B cell (primary cell): ENCODE measurements at regions of chr6 and their contacts with region 1.

Region 1: GRCh38 chr6:149316798-149317655 is 485 bp upstream of the TAB2 start:
- DNase-seq: peak; percentile 96
- ATAC-seq: peak; percentile 74
- H3K4me3 ChIP-seq: peak overlapping the region; percentile 77 to 91 (median 85)
- H3K4me3 Mint-ChIP-seq: peak overlapping the region; percentile 88
- H3K27ac ChIP-seq: peak overlapping the region; percentile 86 to 91
- H3K27ac Mint-ChIP-seq: peak overlapping the region; percentile 88
- H3K4me1 ChIP-seq: peaks cover 14 to 30% of the 10 kb centered on the region in 2 donors
- H3K4me1 Mint-ChIP-seq: peaks cover 27% of the 10 kb centered on the region
- H3K27me3 ChIP-seq: no peaks in the 10 kb centered on the region
- H3K27me3 Mint-ChIP-seq: no peaks in the 10 kb centered on the region
- CTCF ChIP-seq: no peak

Region 2: GRCh38 chr6:149190224-149190831 is 126.7 kb before region 1 on chr6:
- CTCF ChIA-PET with region 1: interaction called, 8 read pairs
- POLR2A ChIA-PET with region 1: interaction called, 4 read pairs
- intact Hi-C with region 1: loop called (anchors 1 kb)
- DNase-seq: peak; percentile 77
- ATAC-seq: peak; percentile 75
- H3K4me3 ChIP-seq: no peak overlapping the region
- H3K4me3 Mint-ChIP-seq: no peak overlapping the region
- H3K27ac ChIP-seq: no peak overlapping the region
- H3K27ac Mint-ChIP-seq: no peak overlapping the region
- H3K4me1 ChIP-seq: peaks cover 0 to 8% of the 10 kb centered on the region in 2 donors
- H3K4me1 Mint-ChIP-seq: peaks cover 10% of the 10 kb centered on the region
- H3K27me3 ChIP-seq: peaks cover 0 to 3% (median 0%) of the 10 kb centered on the region in 4 experiments
- H3K27me3 Mint-ChIP-seq: no peaks in the 10 kb centered on the region
- CTCF ChIP-seq: peak; percentile 77

Region 3: DNA sequence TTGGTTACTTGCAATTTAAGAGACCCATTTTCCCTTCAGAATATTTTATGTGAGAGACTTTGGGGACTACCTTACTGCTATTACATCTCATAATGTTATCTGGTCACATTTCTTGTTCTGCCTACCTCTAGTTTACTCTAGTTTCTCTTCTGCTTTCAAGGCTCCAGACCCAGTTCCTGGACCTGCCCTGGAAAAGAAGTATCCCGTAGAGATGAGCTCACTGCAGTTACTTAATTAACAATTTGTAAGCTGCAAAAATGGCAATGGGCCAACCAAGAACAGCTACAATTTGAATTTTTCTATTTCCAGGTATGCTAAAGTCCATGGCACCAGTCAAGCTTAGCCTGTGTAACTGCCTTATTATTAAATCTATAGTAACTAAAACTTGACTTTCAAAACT is 25.5 kb after region 1 on chr6:
- CTCF ChIA-PET with region 1: no interaction called
- POLR2A ChIA-PET with region 1: no interaction called
- intact Hi-C with region 1: loop called (anchors 2 kb)
- DNase-seq: peak; percentile 35
- ATAC-seq: peak; percentile 47
- H3K4me3 ChIP-seq: no peak overlapping the region
- H3K4me3 Mint-ChIP-seq: peak overlapping the region; percentile 9
- H3K27ac ChIP-seq: peak overlapping the region; percentile 27 to 43
- H3K27ac Mint-ChIP-seq: peak overlapping the region; percentile 8
- H3K4me1 ChIP-seq: peaks cover 12 to 35% of the 10 kb centered on the region in 2 donors
- H3K4me1 Mint-ChIP-seq: peaks cover 62% of the 10 kb centered on the region
- H3K27me3 ChIP-seq: no peaks in the 10 kb centered on the region
- H3K27me3 Mint-ChIP-seq: no peaks in the 10 kb centered on the region
- CTCF ChIP-seq: no peak

Region 4: GRCh38 chr6:149545754-149546528 is 228.9 kb after region 1 on chr6 and contains the start of gene PPIL4:
- CTCF ChIA-PET with region 1: no interaction called
- POLR2A ChIA-PET with region 1: interaction called, 3 read pairs
- intact Hi-C with region 1: loop called (anchors 5 kb)
- DNase-seq: peak; percentile 98
- ATAC-seq: peak; percentile 90
- H3K4me3 ChIP-seq: peak within 1 kb of the TSS; percentile 96 to 100 (median 98)
- H3K4me3 Mint-ChIP-seq: peak within 1 kb of the TSS; percentile 98
- H3K27ac ChIP-seq: peak within 1 kb of the TSS; percentile 99
- H3K27ac Mint-ChIP-seq: peak within 1 kb of the TSS; percentile 98
- H3K4me1 ChIP-seq: peaks cover 17 to 22% of the 10 kb centered on the region in 2 donors
- H3K4me1 Mint-ChIP-seq: peaks cover 39% of the 10 kb centered on the region
- H3K27me3 ChIP-seq: no peaks in the 10 kb centered on the region
- H3K27me3 Mint-ChIP-seq: peaks cover 6% of the 10 kb centered on the region
- CTCF ChIP-seq: peak; percentile 83
- total RNA-seq, gene PPIL4: 34.3 and 36.1 TPM in 2 replicates